Heart left ventricle (tissue), 16 donors: ENCODE measurements at regions of chr15 and their contacts with region 1.

Region 1: GRCh38 chr15:85296615-85297402 is 83.6 kb upstream of the AKAP13 start:
- DNase-seq: peak in 4 of 5 donors; percentile 57 to 70 (median 63)
- ATAC-seq: peak; percentile 87 to 94 (median 94)
- H3K4me3 ChIP-seq: peak overlapping the region in 9 of 12 donors; percentile 28 to 53 (median 45)
- H3K27ac ChIP-seq: peak overlapping the region in 8 of 12 donors; percentile 9 to 57 (median 41)
- H3K4me1 ChIP-seq: peaks cover 0 to 14% (median 7%) of the 10 kb centered on the region in 12 donors
- H3K27me3 ChIP-seq: no peaks in the 10 kb centered on the region
- CTCF ChIP-seq: peak; percentile 53 to 81 (median 72)
- POLR2A ChIP-seq: no peak

Region 2: DNA sequence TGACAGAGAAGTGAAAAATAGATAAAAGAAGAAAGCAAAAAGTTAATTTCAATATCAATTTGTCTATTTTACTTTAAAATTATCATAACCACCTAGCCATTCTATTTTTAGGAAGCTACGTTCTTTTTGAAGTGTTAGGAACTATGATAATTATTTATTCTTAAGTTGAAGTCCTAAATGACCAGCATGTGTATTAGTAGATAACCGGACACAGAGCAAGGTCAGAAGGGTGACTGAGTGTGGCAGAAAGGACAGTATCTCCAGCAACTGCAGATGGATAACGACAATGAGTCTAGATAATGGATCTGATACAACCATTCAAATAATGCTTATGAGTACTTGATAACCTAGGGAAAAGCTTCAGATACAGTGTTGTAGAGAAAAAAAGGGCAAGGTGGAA is 117.1 kb before region 1 on chr15:
- intact Hi-C with region 1: no loop called
- DNase-seq: no peak
- ATAC-seq: peak; percentile 52 to 73 (median 60)
- H3K4me3 ChIP-seq: no peak overlapping the region
- H3K27ac ChIP-seq: peak overlapping the region in 1 of 12 donors; percentile 35
- H3K4me1 ChIP-seq: peaks cover 0 to 5% (median 0%) of the 10 kb centered on the region in 12 donors
- H3K27me3 ChIP-seq: no peaks in the 10 kb centered on the region
- CTCF ChIP-seq: no peak
- POLR2A ChIP-seq: no peak

Region 3: GRCh38 chr15:85412956-85413854 is 116.4 kb after region 1 on chr15:
- intact Hi-C with region 1: loop called in 4 of 10 experiments (anchors 2 to 10 kb)
- DNase-seq: peak in 4 of 5 donors; percentile 44 to 74 (median 48)
- ATAC-seq: peak; percentile 74 to 91 (median 88)
- H3K4me3 ChIP-seq: peak overlapping the region in 9 of 12 donors; percentile 0 to 31 (median 17)
- H3K27ac ChIP-seq: peak overlapping the region in 11 of 12 donors; percentile 7 to 80 (median 60)
- H3K4me1 ChIP-seq: peaks cover 7 to 77% (median 50%) of the 10 kb centered on the region in 12 donors
- H3K27me3 ChIP-seq: no peaks in the 10 kb centered on the region
- CTCF ChIP-seq: peak in 2 of 12 donors; percentile 14 to 24
- POLR2A ChIP-seq: no peak

Region 4: GRCh38 chr15:85453038-85453872 is 156.4 kb after region 1 on chr15:
- intact Hi-C with region 1: no loop called
- DNase-seq: no peak
- ATAC-seq: peak; percentile 14 to 59 (median 19)
- H3K4me3 ChIP-seq: no peak overlapping the region
- H3K27ac ChIP-seq: peak overlapping the region in 6 of 12 donors; percentile 4 to 41 (median 24)
- H3K4me1 ChIP-seq: peaks cover 0 to 77% (median 31%) of the 10 kb centered on the region in 12 donors
- H3K27me3 ChIP-seq: no peaks in the 10 kb centered on the region
- CTCF ChIP-seq: no peak
- POLR2A ChIP-seq: no peak

Region 5: DNA sequence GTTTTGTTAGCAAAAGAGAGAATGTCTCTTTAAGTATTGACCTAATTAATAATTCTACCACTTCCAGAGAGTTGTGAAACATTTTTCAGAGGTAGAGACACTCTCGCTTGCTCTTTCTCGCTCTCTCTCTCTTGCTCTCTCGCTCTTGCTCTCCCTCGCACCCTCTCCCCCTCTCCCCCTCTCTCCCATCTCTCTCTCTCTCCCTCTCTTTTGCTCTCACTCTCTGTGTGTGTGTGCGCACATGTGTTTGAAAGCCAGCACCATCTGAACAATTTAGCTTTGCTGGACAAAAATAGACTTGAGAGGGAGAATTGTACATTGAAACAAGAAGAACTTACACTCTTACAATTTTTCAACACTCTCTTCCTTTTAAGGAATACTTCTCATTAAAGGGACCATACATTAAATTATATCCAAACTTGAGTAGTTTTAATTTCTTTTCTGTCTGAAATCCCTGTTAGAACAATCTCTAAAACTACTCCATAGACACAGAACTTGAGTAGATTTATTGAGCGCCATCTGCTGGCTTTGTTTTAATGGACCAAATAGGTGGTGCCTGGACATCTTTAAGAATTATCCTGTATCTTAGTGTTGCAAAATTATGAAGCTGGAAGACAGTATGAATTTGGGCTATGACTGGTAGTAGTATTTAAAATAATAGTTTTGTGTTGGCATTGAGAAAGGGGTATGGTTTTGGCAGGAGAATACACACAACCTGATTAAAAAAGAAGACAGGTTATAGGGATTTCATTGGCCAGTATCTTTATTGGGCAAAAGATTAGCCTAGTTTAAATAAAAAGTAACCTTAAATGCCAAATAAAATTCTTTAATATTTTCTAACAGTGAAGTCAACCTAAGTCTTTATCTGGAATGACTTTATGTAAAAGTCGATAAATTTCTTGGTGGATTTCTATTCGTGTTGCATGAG is 208.2 kb after region 1 on chr15:
- intact Hi-C with region 1: loop called in 1 of 10 experiments (anchors 5 kb)
- DNase-seq: peak in 2 of 5 donors; percentile 39 to 62
- ATAC-seq: peak in 3 of 4 donors; percentile 50 to 66 (median 58)
- H3K4me3 ChIP-seq: no peak overlapping the region
- H3K27ac ChIP-seq: peak overlapping the region in 10 of 12 donors; percentile 29 to 83 (median 64)
- H3K4me1 ChIP-seq: peaks cover 2 to 91% (median 48%) of the 10 kb centered on the region in 12 donors
- H3K27me3 ChIP-seq: no peaks in the 10 kb centered on the region
- CTCF ChIP-seq: peak; percentile 29 to 79 (median 62)
- POLR2A ChIP-seq: no peak

Region 6: DNA sequence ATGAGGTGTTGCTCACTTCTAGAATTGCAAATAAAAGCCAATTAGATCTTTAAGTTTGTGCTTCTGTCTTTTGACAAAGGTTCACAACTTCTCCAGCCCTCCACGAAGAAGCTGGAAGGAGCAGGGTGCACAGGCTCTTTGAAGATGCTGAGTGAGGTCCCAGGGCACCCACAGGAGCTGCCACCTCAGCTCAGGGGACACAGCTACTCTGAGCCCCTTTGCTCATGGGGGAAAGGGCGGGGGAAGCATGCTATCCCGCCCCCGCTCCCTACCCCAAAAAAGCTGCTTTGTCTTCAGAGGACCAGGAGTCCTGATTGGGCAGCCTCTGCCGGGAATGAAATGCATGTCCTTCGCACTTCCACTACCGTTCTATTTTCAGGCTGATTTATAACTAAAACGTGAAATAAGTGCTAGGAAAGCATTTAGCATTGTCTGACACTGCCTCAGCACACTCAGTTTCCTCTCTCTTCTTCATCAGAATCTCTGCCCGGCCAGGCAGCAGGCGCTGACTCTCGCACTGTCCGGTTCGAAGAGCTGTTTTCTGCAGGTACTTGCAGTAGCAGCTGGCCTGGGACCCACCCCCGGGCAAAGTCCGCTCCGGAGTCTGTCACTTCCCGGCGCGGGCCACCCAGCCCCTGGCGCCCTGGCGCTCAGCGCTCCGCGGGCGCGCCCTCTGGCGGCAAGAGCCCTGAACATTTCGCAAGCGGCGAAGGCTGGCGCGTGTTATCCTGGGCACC is 543.4 kb after region 1 on chr15:
- intact Hi-C with region 1: loop called in 6 of 10 experiments (anchors 10 kb)
- DNase-seq: peak; percentile 72 to 91 (median 82)
- ATAC-seq: peak; percentile 78 to 95 (median 92)
- H3K4me3 ChIP-seq: peak overlapping the region in 9 of 12 donors; percentile 20 to 55 (median 41)
- H3K27ac ChIP-seq: no peak overlapping the region
- H3K4me1 ChIP-seq: peaks cover 0 to 11% (median 7%) of the 10 kb centered on the region in 12 donors
- H3K27me3 ChIP-seq: no peaks in the 10 kb centered on the region
- CTCF ChIP-seq: peak; percentile 86 to 98 (median 92)
- POLR2A ChIP-seq: no peak